ENCODE measurements at regions of chr17 and their contacts with region 1.

Region 1: GRCh38 chr17:78421484-78422266 is 43.2 kb downstream of the PGS1 start:
- DNase-seq: peak; percentile 32
- H3K4me3 ChIP-seq: no peak overlapping the region
- H3K27ac ChIP-seq: no peak overlapping the region
- H3K27me3 ChIP-seq: no peaks in the 10 kb centered on the region
- CTCF ChIP-seq: peak; percentile 99

Region 2: DNA sequence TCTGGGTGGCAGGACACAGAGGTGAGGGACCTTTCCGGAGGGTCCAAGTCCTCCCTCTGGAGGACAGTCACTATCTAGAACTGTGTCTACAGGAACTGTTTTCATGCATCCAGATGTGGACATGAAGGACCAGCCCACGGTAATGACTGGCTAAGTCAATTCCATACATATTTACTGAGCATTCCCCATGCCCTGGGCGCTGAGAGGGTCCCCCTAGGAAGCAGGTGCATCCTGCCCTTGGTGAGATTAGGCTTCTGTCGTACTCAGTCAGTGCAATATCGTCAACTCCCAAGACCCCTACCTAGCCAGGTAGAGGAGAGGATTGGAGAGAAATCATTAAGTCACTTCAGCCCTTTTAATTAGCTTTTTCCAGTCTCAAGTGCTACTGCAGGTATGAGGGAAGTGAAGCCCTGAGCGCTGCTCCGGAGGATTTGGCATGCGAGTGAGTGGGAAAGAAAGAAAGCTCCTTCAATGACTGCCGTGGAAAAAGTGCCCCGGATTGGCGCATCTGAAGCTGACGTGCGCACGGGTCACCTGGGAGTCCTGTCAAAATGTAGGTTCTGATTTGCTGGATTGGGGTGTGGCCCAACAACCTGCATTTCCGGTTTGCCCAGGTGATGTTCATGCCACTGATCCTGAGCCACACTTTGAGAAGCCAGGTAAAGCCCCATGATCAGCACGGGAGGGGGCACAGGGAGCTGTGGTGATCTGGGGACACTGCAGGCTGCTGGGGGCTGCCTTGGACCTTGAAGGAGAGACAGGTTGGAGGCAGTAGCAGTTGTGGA is 830.5 kb before region 1 on chr17:
- CTCF ChIA-PET with region 1: no interaction called
- POLR2A ChIA-PET with region 1: no interaction called
- DNase-seq: no peak
- H3K4me3 ChIP-seq: no peak overlapping the region
- H3K27ac ChIP-seq: no peak overlapping the region
- H3K27me3 ChIP-seq: peaks cover 29% of the 10 kb centered on the region
- CTCF ChIP-seq: no peak

Region 3: GRCh38 chr17:78082988-78083387 is 338.7 kb before region 1 on chr17:
- CTCF ChIA-PET with region 1: no interaction called
- POLR2A ChIA-PET with region 1: no interaction called
- DNase-seq: no peak
- H3K4me3 ChIP-seq: no peak overlapping the region
- H3K27ac ChIP-seq: no peak overlapping the region
- H3K27me3 ChIP-seq: no peaks in the 10 kb centered on the region
- CTCF ChIP-seq: no peak

Region 4: DNA sequence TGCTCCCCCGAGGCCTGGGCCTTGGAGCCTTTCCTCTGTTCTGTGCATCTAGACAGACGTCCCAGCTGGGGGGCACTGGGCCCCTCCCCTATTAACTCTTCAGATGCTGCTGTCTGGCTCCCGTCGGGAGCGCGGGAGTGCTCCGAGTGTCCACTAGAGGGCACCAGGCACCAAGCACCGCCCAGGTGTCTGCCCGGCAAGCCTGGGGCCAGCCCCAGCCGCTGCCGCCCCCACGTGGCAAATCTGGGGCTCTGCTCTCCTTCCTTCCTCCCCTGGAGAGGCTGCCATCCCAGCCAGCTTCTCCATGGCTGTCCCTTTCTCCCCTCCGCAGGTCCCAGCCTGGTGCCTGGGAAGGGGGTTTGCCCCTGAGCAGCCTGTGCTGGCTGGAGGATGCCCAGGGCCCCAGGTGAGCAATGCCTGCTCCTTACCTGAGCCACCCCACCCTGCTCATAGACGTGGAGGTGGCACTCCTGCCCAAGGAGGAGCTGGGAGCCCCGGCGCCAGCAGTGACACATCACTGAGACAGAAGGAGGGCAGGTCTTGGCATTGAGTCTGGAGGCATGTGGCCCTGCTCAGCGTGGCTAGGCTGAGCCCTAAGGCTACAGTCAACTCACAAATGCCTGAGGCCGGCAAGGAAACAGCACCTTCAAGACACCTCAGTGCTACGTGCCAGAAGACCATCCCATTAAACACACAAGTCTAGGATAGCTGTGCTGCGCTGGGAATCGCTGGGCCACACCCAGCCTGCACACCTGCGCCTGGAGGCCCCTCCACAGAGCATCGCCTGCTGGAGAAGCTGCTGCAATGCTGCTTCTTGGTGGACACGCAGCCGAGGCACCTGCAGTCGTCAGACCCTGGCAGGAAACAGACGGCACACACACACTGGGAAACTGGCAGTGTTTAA is 170.5 kb before region 1 on chr17:
- CTCF ChIA-PET with region 1: interaction called, 17 read pairs
- POLR2A ChIA-PET with region 1: no interaction called
- DNase-seq: peak; percentile 54
- H3K4me3 ChIP-seq: no peak overlapping the region
- H3K27ac ChIP-seq: no peak overlapping the region
- H3K27me3 ChIP-seq: peaks cover 2% of the 10 kb centered on the region
- CTCF ChIP-seq: peak; percentile 99

Region 5: GRCh38 chr17:78289802-78290363 is 131.8 kb before region 1 on chr17:
- CTCF ChIA-PET with region 1: interaction called, 12 read pairs
- POLR2A ChIA-PET with region 1: no interaction called
- DNase-seq: peak; percentile 82
- H3K4me3 ChIP-seq: no peak overlapping the region
- H3K27ac ChIP-seq: no peak overlapping the region
- H3K27me3 ChIP-seq: no peaks in the 10 kb centered on the region
- CTCF ChIP-seq: peak; percentile 90

Region 6: GRCh38 chr17:78369791-78370381 is 51.8 kb before region 1 on chr17:
- CTCF ChIA-PET with region 1: interaction called, 12 read pairs
- POLR2A ChIA-PET with region 1: no interaction called
- DNase-seq: no peak
- H3K4me3 ChIP-seq: no peak overlapping the region
- H3K27ac ChIP-seq: no peak overlapping the region
- H3K27me3 ChIP-seq: no peaks in the 10 kb centered on the region
- CTCF ChIP-seq: no peak

Region 7: DNA sequence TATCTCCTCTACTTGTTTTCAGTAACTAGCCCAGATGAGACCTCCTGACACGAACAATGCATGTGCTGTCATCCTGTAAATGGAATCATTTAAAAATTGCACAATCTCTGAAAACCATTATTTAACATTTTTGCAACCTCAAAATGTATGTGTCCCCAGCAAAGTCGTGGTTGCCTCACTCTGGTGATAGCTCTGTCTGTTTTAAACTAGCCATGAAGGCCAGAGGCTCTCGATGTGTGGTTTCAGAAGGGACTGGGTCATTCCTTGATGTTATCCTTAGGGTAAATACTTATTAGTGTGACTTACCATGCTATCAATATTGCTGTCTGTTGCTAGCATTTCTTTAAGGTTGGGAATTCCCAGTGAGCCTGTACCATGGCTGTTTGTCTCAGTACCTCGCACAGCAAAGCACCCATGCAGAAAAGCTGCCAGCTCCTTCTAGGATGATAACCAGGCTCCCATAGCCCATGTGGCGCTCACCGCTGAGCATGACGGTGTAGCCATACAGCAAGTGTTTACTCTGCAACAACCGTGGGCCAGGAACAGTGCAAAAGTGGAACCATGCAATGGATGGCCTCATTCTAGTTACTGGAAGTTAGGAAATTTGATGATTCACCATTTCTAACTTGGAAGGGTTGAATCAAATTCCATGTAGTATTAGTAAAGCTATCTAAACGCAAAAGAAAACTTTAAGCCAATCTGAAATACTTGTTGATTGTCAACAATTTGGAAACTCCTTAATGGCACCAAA is 46.1 kb before region 1 on chr17:
- CTCF ChIA-PET with region 1: interaction called, 12 read pairs
- POLR2A ChIA-PET with region 1: no interaction called
- DNase-seq: peak; percentile 88
- H3K4me3 ChIP-seq: no peak overlapping the region
- H3K27ac ChIP-seq: peak overlapping the region; percentile 100
- H3K27me3 ChIP-seq: no peaks in the 10 kb centered on the region
- CTCF ChIP-seq: no peak

Region 8: GRCh38 chr17:78383725-78384471 is 37.8 kb before region 1 on chr17:
- CTCF ChIA-PET with region 1: interaction called, 10 read pairs
- POLR2A ChIA-PET with region 1: no interaction called
- DNase-seq: peak; percentile 97
- H3K4me3 ChIP-seq: no peak overlapping the region
- H3K27ac ChIP-seq: peak overlapping the region; percentile 95
- H3K27me3 ChIP-seq: no peaks in the 10 kb centered on the region
- CTCF ChIP-seq: no peak